ENCODE measurements at regions of chr5 and their contacts with region 1.

Region 1: DNA sequence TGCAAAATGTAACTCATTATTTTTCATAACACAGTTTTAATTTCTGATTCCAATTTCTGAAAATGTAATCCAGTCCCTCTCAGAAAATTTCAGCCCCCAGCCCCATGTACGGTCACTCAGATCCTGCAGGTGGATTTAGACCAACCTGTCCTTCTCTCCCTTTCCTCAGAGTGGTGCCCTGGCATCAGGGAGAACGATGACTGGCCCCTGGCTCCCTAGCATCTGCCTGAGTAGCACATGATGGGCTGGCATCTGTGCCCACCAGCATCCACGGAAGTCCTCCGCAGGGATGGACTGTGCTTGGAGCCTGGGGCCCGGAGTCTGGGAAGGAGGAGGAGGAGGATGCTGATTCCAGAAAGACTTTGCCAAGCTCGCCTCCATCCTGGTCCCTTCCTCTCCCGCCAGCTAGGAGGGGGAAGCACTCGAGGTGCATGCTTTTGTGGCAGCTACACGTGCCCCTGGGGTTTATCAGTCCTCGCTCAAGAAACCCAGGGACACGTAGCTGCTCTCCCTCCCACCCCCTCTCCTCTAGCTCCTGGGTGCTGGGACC is 54.4 kb upstream of the RUFY1 start:
- DNase-seq: no peak
- H3K4me3 ChIP-seq: no peak overlapping the region
- H3K27ac ChIP-seq: no peak overlapping the region
- H3K4me1 ChIP-seq: no peaks in the 10 kb centered on the region; a peak in 1 of 7 replicates
- H3K27me3 ChIP-seq: no peaks in the 10 kb centered on the region
- CTCF ChIP-seq: peak; percentile 48 to 57 (median 53)
- EP300 ChIP-seq: no peak
- POLR2A ChIP-seq: no peak
- RAD21 ChIP-seq: peak; percentile 78 to 79

Region 2: GRCh38 chr5:179343719-179344430 is 152.1 kb before region 1 on chr5:
- CTCF ChIA-PET with region 1: interaction called, 16 read pairs
- POLR2A ChIA-PET with region 1: no interaction called
- DNase-seq: peak; percentile 61 to 95
- H3K4me3 ChIP-seq: peak overlapping the region; percentile 66 to 79 (median 70)
- H3K27ac ChIP-seq: no peak overlapping the region
- H3K4me1 ChIP-seq: peaks cover 3 to 15% (median 9%) of the 10 kb centered on the region in 4 experiments
- H3K27me3 ChIP-seq: peaks cover 11 to 57% (median 46%) of the 10 kb centered on the region in 4 experiments
- CTCF ChIP-seq: peak in 2 of 3 experiments; percentile 59 to 71; a peak in 3 of 4 replicates
- EP300 ChIP-seq: no peak
- POLR2A ChIP-seq: no peak
- RAD21 ChIP-seq: peak; percentile 53 to 68

Region 3: DNA sequence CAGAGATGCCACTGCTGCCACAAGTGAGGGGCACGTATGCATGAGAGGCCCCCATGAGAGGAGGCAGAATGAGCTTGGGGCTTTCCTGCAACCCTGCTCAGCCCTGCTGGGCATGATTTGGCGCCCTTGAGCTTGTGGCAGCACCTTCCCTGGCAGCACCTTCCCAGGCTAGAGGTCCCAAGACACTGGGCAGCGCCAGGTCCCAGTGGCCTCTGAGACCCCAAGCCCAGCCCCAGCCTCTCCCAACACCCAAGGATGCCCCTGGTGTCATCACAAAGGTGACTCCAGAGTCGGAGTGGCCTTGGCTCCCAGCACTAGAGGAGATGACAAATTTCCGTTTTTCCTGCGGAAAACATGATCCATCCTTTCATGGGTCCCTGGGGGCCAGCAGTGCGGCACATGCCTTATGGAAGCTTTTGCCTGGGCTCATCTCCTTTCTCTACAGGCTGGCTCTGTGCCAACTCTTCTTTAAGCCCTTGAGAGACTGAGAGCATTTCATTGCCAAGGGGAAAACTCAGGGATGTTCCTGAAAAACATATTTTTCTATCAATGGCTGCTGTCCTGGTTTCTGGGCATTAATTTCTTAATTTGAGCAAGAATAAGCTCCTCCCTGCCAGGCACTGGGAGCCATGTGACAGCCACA is 73.6 kb before region 1 on chr5:
- CTCF ChIA-PET with region 1: interaction called, 11 read pairs
- POLR2A ChIA-PET with region 1: no interaction called
- DNase-seq: no peak
- H3K4me3 ChIP-seq: no peak overlapping the region
- H3K27ac ChIP-seq: no peak overlapping the region
- H3K4me1 ChIP-seq: no peaks in the 10 kb centered on the region; a peak in 1 of 7 replicates
- H3K27me3 ChIP-seq: no peaks in the 10 kb centered on the region; a peak in 1 of 7 replicates
- CTCF ChIP-seq: no peak
- EP300 ChIP-seq: no peak
- POLR2A ChIP-seq: no peak
- RAD21 ChIP-seq: no peak

Region 4: DNA sequence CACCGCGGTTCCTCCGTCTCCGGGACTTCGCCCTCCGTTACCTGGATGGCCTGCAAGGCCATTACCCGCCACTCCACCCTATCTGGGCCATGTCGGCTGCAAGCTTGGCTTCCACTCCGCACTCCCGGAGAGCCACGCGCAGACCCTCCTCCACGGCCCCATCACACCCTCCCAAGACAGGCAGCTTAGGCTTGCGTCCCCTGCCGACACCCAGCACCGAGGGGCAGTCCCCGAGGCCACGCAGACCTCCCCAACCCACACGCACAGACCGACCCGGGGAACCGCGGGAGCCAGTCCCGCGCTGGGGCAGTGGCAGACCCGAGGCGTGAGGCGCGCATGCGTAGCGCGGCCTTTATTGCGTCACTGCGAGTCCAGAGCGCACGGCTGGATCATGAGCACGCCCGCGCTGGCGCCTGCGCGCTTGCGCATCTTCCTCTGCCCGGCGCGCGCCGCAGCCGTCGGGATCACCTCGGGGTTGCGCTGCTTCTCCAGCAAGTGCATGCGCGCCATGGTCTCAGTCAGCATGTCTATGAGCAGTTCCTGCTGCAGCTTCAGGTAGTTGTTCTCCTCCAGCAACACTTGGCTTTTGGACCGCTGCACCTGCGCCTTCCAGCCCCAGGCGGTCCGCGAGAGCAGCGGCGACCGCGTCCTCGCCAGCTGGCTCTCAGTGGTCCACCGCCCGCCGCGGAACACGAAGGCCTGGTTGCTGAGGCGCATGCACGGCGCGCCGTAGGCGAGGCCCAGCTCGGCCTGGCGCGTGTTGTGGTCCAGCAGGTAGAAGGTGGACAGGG is 182.4 kb after region 1 on chr5:
- CTCF ChIA-PET with region 1: no interaction called
- POLR2A ChIA-PET with region 1: no interaction called
- DNase-seq: peak; percentile 88 to 94
- H3K4me3 ChIP-seq: peak overlapping the region; percentile 78 to 89 (median 82)
- H3K27ac ChIP-seq: peak overlapping the region; percentile 76
- H3K4me1 ChIP-seq: peaks cover 0 to 12% (median 7%) of the 10 kb centered on the region in 4 experiments; a peak in 5 of 7 replicates
- H3K27me3 ChIP-seq: peaks cover 0 to 4% (median 0%) of the 10 kb centered on the region in 4 experiments; a peak in 1 of 7 replicates
- CTCF ChIP-seq: peak in 1 of 3 experiments; percentile 0; a peak in 1 of 4 replicates
- EP300 ChIP-seq: no peak
- POLR2A ChIP-seq: peak; percentile 80 to 81
- RAD21 ChIP-seq: no peak

Measured in H1 (cell line).